ENCODE measurements at regions of chr16 and their contacts with region 1.

Region 1: DNA sequence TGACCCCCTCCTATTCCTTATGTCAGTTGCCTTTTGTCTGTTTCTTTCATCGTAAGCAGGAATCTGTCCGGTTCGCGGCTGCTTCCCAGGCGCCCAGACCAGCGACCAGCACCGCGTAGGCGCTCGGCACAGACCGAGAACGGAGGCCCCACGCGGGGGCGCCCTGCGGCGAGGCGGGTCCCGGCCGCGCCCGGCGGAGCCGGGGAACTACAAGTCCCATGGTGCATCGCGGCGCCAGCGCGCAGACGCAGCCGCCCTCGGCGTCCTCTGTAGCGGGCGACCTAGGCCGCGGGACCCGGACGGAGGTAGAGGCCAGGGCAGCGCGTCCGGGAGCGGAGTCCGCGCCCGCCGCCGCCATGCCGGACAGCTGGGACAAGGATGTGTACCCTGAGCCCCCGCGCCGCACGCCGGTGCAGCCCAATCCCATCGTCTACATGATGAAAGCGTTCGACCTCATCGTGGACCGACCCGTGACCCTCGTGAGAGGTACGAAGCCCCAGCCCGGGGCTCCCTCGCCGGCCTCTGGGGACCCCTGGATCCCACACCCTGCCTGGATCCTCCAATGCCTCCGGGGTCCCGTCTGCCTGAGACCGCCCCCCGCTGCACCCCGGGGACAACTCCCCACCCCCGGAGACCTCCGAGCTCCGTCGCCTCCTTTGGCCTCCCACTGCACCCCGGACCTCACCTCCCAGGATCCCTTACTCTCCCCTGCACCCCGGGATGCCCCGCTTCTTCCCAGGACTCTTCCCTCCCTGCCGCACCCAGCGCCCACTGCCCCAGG is at the start of gene NDUFB10:
- DNase-seq: peak; percentile 95
- H3K4me3 Mint-ChIP-seq: peak within 1 kb of the TSS; percentile 96
- H3K27ac Mint-ChIP-seq: peak within 1 kb of the TSS; percentile 86
- H3K4me1 Mint-ChIP-seq: peaks cover 40% of the 10 kb centered on the region
- H3K27me3 Mint-ChIP-seq: peaks cover 1% of the 10 kb centered on the region
- total RNA-seq, gene NDUFB10: 122 to 125 TPM

Region 2: GRCh38 chr16:1942810-1943726 is 16.4 kb before region 1 on chr16 and contains the start of gene MSRB1:
- CTCF ChIA-PET with region 1: interaction called, 6 read pairs
- POLR2A ChIA-PET with region 1: interaction called, 17 read pairs
- intact Hi-C with region 1: loop called (anchors 1 kb)
- DNase-seq: peak; percentile 100
- H3K4me3 Mint-ChIP-seq: peak within 1 kb of the TSS; percentile 88
- H3K27ac Mint-ChIP-seq: peak within 1 kb of the TSS; percentile 73
- H3K4me1 Mint-ChIP-seq: peaks cover 25% of the 10 kb centered on the region
- H3K27me3 Mint-ChIP-seq: no peaks in the 10 kb centered on the region
- total RNA-seq, gene MSRB1: 20.7 to 23.6 TPM

Region 3: GRCh38 chr16:1971796-1972489 is 12.5 kb after region 1 on chr16 and contains the start of gene TBL3:
- CTCF ChIA-PET with region 1: no interaction called
- POLR2A ChIA-PET with region 1: interaction called, 15 read pairs
- intact Hi-C with region 1: no loop called
- DNase-seq: peak; percentile 98
- H3K4me3 Mint-ChIP-seq: peak within 1 kb of the TSS; percentile 100
- H3K27ac Mint-ChIP-seq: peak within 1 kb of the TSS; percentile 100
- H3K4me1 Mint-ChIP-seq: peaks cover 20% of the 10 kb centered on the region
- H3K27me3 Mint-ChIP-seq: no peaks in the 10 kb centered on the region
- total RNA-seq, gene TBL3: 45.7 to 47.3 TPM